Activated B cell treated with CpG ODN at 0.5 μM for 24 hours (primary cell): ENCODE measurements at regions of chr4 and their contacts with region 1.

Region 1: DNA sequence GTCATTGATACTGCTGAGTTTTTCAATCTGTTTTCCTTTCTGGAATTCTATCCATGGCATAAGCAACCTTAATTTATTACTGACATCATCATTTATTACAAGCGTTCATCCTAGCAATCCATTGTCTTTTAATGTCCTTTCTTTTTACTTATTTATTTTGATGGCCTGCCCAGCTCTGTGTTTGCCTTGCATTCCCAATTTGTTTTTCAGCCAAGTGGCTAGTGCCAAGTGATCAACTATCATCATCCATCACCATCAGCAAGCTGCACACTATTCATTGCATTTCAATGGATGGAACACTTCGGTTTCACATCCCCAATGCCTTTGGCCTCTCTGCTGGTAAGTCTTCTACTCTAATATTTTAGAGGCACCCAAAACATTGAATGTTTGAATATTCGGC is 831.7 kb upstream of the EPHA5 start:
- DNase-seq: no peak
- ATAC-seq: no peak
- H3K4me3 Mint-ChIP-seq: no peak overlapping the region
- H3K27ac Mint-ChIP-seq: no peak overlapping the region
- H3K4me1 Mint-ChIP-seq: no peaks in the 10 kb centered on the region
- H3K27me3 Mint-ChIP-seq: no peaks in the 10 kb centered on the region
- CTCF ChIP-seq: no peak

Region 2: DNA sequence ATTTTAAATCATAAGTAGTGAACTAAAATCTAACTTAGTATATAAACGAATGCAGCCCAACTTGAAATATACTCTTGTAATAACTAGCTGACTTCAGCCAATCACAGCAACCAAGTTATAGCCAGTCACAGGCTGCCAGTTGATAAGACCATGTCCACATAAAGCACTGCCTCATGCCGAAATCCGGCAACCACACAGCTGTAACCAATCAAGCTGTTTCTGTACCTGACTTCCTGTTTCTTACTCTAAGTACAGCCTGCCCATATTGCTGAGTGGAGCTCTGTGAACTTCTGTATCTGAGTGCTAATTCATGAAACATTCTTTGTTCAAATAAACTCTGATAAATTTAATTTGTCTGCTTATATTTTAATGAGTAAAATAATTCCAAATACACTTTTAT is 26.4 kb before region 1 on chr4:
- CTCF ChIA-PET with region 1: no interaction called
- POLR2A ChIA-PET with region 1: no interaction called
- intact Hi-C with region 1: loop called (anchors 1 kb)
- DNase-seq: no peak
- ATAC-seq: no peak
- H3K4me3 Mint-ChIP-seq: no peak overlapping the region
- H3K27ac Mint-ChIP-seq: no peak overlapping the region
- H3K4me1 Mint-ChIP-seq: no peaks in the 10 kb centered on the region
- H3K27me3 Mint-ChIP-seq: no peaks in the 10 kb centered on the region
- CTCF ChIP-seq: no peak